Activated CD4-positive, alpha-beta T cell treated with anti-CD3 and anti-CD28 coated beads for 36 hours (primary cell): ENCODE measurements at regions of chr2 and their contacts with region 1.

Region 1: GRCh38 chr2:7825591-7826312 is 856.1 kb upstream of the ID2 start:
- DNase-seq: peak; percentile 86
- ATAC-seq: peak; percentile 95
- H3K4me3 Mint-ChIP-seq: peak overlapping the region; percentile 26
- H3K27ac Mint-ChIP-seq: peak overlapping the region; percentile 93
- H3K4me1 Mint-ChIP-seq: peaks cover 27% of the 10 kb centered on the region
- H3K27me3 Mint-ChIP-seq: peaks cover 3% of the 10 kb centered on the region

Region 2: DNA sequence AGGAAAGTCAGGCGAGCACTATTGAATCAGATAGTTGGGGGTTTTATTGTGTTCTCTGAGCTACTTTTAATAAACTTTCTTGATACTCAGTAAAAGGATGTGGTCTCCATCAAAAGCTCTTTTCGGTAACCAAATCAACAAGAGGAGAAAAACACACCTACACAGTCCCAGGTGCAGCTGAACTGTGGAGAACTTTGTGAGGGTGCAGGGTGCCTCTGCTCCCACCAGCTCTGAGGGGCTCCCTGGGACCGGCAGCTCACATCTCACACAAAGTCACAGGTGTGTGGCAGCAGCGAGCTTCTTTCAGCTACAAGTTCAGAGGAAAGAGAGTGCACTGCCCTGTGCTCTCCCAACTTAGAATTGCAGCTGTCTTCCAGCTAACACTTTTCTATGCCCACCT is 258.1 kb before region 1 on chr2:
- CTCF ChIA-PET with region 1: no interaction called
- POLR2A ChIA-PET with region 1: no interaction called
- intact Hi-C with region 1: loop called in 1 of 2 experiments (anchors 5 kb)
- DNase-seq: peak; percentile 81
- ATAC-seq: peak; percentile 93
- H3K4me3 Mint-ChIP-seq: peak overlapping the region; percentile 9
- H3K27ac Mint-ChIP-seq: peak overlapping the region; percentile 88
- H3K4me1 Mint-ChIP-seq: peaks cover 55% of the 10 kb centered on the region
- H3K27me3 Mint-ChIP-seq: no peaks in the 10 kb centered on the region

Region 3: DNA sequence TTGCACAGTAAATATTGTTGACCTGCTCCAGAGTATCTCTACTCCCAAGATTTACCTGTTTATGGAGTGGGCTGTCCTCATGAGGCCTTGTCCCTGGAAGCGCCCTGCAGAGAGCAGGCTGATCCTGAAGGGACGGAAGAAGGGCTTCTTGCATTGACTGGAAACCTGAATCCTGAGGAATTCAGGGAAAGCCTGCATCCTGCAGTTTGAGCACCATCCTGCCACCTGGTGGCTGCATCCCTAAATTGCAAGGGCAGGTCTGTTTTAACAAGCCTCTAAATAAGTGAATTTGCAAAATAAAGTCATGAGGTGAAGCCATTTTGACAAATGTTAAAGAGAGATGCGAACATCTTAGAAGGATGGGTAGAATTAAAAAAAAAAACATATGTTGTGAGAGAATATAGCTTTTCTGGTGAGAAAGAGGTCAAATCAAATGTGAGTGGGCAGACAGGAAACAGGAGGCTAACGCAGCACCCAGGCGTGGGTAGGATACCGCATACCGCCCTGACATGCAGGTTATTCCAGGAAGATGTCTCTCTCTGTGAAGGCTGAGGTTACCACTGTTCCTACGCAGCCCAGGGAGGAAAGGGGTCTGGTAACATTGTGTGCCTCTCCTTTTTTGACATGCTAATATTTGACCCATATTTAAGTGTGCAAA is 153.6 kb before region 1 on chr2:
- CTCF ChIA-PET with region 1: interaction called, 3 read pairs
- POLR2A ChIA-PET with region 1: interaction called, 3 read pairs
- intact Hi-C with region 1: loop called in 1 of 2 experiments (anchors 5 kb)
- DNase-seq: peak; percentile 80
- ATAC-seq: peak; percentile 76
- H3K4me3 Mint-ChIP-seq: peak overlapping the region; percentile 48
- H3K27ac Mint-ChIP-seq: peak overlapping the region; percentile 96
- H3K4me1 Mint-ChIP-seq: peaks cover 55% of the 10 kb centered on the region
- H3K27me3 Mint-ChIP-seq: no peaks in the 10 kb centered on the region

Region 4: GRCh38 chr2:7773362-7774360 is 52.1 kb before region 1 on chr2:
- CTCF ChIA-PET with region 1: interaction called, 7 read pairs
- POLR2A ChIA-PET with region 1: interaction called, 9 read pairs
- intact Hi-C with region 1: loop called (anchors 1 kb)
- DNase-seq: peak; percentile 66
- ATAC-seq: peak; percentile 76
- H3K4me3 Mint-ChIP-seq: peak overlapping the region; percentile 11
- H3K27ac Mint-ChIP-seq: peak overlapping the region; percentile 64
- H3K4me1 Mint-ChIP-seq: peaks cover 28% of the 10 kb centered on the region
- H3K27me3 Mint-ChIP-seq: peaks cover 3% of the 10 kb centered on the region

Region 5: GRCh38 chr2:7930800-7931635 is 105.3 kb after region 1 on chr2:
- CTCF ChIA-PET with region 1: no interaction called
- POLR2A ChIA-PET with region 1: interaction called, 3 read pairs
- intact Hi-C with region 1: loop called (anchors 1 kb)
- DNase-seq: peak; percentile 56
- ATAC-seq: peak; percentile 80
- H3K4me3 Mint-ChIP-seq: peak overlapping the region; percentile 0
- H3K27ac Mint-ChIP-seq: peak overlapping the region; percentile 93
- H3K4me1 Mint-ChIP-seq: peaks cover 33% of the 10 kb centered on the region
- H3K27me3 Mint-ChIP-seq: no peaks in the 10 kb centered on the region

Region 6: GRCh38 chr2:7984693-7985353 is 159.1 kb after region 1 on chr2:
- CTCF ChIA-PET with region 1: no interaction called
- POLR2A ChIA-PET with region 1: interaction called, 3 read pairs
- intact Hi-C with region 1: loop called (anchors 1 kb)
- DNase-seq: no peak
- ATAC-seq: peak; percentile 96
- H3K4me3 Mint-ChIP-seq: peak overlapping the region; percentile 44
- H3K27ac Mint-ChIP-seq: peak overlapping the region; percentile 95
- H3K4me1 Mint-ChIP-seq: peaks cover 33% of the 10 kb centered on the region
- H3K27me3 Mint-ChIP-seq: no peaks in the 10 kb centered on the region